ENCODE measurements at regions of chr9 and their contacts with region 1.

Region 1: GRCh38 chr9:107172160-107172978 is 110.7 kb upstream of the RAD23B start:
- DNase-seq: peak; percentile 89
- H3K4me3 Mint-ChIP-seq: no peak overlapping the region
- H3K27ac Mint-ChIP-seq: peak overlapping the region; percentile 54
- H3K4me1 Mint-ChIP-seq: peaks cover 9% of the 10 kb centered on the region
- H3K27me3 Mint-ChIP-seq: no peaks in the 10 kb centered on the region

Region 2: GRCh38 chr9:107213561-107214028 is 41.2 kb after region 1 on chr9:
- intact Hi-C with region 1: loop called (anchors 1 kb)
- DNase-seq: peak; percentile 74
- H3K4me3 Mint-ChIP-seq: peak overlapping the region; percentile 1
- H3K27ac Mint-ChIP-seq: peak overlapping the region; percentile 77
- H3K4me1 Mint-ChIP-seq: peaks cover 13% of the 10 kb centered on the region
- H3K27me3 Mint-ChIP-seq: peaks cover 4% of the 10 kb centered on the region

Region 3: DNA sequence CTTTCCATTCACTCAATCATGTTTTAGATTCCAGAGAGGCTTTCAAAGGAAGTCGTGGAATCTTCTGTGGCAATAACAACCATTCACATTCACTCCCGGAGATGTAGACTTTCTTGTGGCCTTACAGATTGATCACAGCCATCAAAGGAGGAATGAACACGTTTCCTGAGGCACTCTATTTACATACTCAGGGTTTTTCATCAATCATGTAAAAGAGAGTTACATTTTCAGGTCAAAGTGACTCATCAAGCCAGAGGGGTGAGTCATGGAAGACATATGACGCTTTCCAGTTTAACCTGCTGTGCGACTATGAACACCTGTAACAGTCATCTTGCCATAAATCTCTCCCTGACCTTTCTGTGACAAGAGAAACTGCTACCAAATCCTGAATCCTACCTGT is 71.4 kb after region 1 on chr9:
- intact Hi-C with region 1: loop called (anchors 1 kb)
- DNase-seq: peak; percentile 68
- H3K4me3 Mint-ChIP-seq: no peak overlapping the region
- H3K27ac Mint-ChIP-seq: peak overlapping the region; percentile 74
- H3K4me1 Mint-ChIP-seq: peaks cover 17% of the 10 kb centered on the region
- H3K27me3 Mint-ChIP-seq: no peaks in the 10 kb centered on the region

Region 4: GRCh38 chr9:107340920-107341632 is 168.7 kb after region 1 on chr9:
- intact Hi-C with region 1: loop called (anchors 5 kb)
- DNase-seq: peak; percentile 94
- H3K4me3 Mint-ChIP-seq: no peak overlapping the region
- H3K27ac Mint-ChIP-seq: peak overlapping the region; percentile 6
- H3K4me1 Mint-ChIP-seq: peaks cover 9% of the 10 kb centered on the region
- H3K27me3 Mint-ChIP-seq: no peaks in the 10 kb centered on the region

Measured in activated CD4-positive, alpha-beta T cell treated with anti-CD3 and anti-CD28 coated beads, Interleukin-2, amount 10 ng/mL, durations not matched to agents 24 days and 14 days (primary cell).